ENCODE measurements at regions of chr13 and their contacts with region 1.

Region 1: DNA sequence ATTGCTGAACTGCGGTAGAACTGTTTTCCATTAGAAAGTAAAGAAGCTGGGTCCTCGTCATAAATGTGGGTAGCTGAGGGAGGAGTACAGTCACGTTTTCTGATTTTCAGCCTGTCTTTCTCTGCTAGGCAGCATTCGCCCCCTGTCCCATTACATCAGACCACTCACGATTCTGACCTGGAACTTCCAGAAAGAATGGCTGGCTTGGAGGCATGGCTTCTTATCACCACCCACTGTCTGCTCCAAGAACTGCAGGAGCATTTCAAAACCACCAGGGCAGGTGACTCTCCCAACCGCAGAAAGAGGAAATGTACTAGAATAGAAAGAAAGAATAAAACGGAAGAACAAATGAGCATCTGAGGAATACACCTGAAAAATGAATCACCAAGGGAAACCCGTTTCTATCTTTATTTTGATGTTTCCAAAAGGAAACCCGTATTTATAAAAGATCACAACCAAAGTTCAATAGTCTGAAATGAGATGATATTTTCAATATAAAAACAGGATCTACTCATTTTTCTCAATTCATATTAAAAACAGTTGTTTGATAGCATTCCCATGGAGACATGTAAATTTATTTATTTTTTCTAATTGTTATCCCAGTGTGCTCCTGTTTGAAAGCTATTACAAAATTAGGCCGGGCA is 22.1 kb upstream of the POMP start:
- DNase-seq: peak; percentile 68
- ATAC-seq: peak; percentile 58
- H3K4me3 ChIP-seq: no peak overlapping the region
- H3K27ac ChIP-seq: no peak overlapping the region
- H3K4me1 ChIP-seq: peaks cover 22% of the 10 kb centered on the region
- H3K27me3 ChIP-seq: no peaks in the 10 kb centered on the region
- CTCF ChIP-seq: peak; percentile 78 to 86 (median 86)
- EP300 ChIP-seq: peak in 1 of 2 experiments; percentile 45; a peak in 1 of 4 replicates
- POLR2A ChIP-seq: no peak
- RAD21 ChIP-seq: peak; percentile 93

Region 2: DNA sequence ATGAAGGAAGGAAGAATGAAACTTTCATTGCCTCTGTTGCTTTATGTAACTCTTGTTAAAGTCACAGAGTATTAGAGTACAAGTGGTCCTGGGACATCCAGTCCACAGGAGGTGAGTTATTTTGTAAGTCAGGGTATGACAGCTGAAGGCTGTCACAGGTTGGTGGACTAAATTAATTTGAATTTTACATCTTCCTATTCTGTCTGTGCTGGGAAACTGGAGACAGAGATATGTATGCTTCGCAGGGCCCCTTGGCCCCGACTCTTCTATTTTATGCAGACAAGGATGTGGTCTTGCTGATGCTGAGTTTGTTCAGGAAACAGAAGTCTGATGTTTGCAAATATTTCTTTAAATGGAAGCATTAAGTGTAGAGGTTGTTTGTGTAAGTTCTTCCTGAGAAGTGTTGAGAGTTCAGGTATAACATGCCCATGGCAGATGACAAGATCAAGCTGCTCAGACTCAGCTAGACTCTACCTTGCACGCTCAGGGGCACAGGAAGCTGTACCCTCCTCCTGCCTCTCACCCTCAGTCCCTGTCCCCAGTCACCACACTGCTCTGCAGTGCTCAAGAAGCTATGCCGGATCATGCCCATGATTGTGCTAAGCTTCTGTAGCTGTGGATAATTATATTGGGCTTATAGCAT is 1342.8 kb before region 1 on chr13:
- CTCF ChIA-PET with region 1: no interaction called
- POLR2A ChIA-PET with region 1: no interaction called
- RAD21 ChIA-PET with region 1: no interaction called
- SMC1A ChIA-PET with region 1: no interaction called
- in situ Hi-C with region 1: no loop called
- intact Hi-C with region 1: no loop called
- DNase-seq: no peak
- ATAC-seq: no peak
- H3K4me3 ChIP-seq: no peak overlapping the region
- H3K27ac ChIP-seq: no peak overlapping the region
- H3K4me1 ChIP-seq: no peaks in the 10 kb centered on the region
- H3K27me3 ChIP-seq: peaks cover 1 to 6% of the 10 kb centered on the region in 2 experiments
- CTCF ChIP-seq: no peak
- EP300 ChIP-seq: no peak
- POLR2A ChIP-seq: no peak
- RAD21 ChIP-seq: no peak

Region 3: DNA sequence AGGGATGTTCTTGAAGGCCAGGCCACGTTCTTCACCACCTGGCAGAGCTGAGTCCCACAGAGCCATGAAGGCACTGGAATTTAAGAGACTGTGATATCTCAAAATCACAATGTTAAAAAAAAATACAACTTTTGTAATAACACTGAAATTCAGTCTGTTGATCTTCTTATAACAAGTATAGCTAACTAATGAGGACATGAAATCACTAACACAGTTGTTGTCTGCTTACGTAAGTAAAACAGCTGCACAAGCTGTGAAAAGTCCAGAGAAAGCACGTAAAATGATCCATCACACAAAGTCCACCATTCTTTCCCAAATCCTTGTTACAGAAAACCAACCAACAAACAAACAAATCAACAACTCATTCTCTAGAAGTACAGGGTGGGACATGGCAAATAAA is 569.3 kb before region 1 on chr13:
- CTCF ChIA-PET with region 1: no interaction called
- POLR2A ChIA-PET with region 1: no interaction called
- RAD21 ChIA-PET with region 1: no interaction called
- SMC1A ChIA-PET with region 1: no interaction called
- in situ Hi-C with region 1: no loop called
- intact Hi-C with region 1: loop called (anchors 10 kb)
- DNase-seq: no peak
- ATAC-seq: no peak
- H3K4me3 ChIP-seq: no peak overlapping the region
- H3K27ac ChIP-seq: no peak overlapping the region
- H3K4me1 ChIP-seq: no peaks in the 10 kb centered on the region
- H3K27me3 ChIP-seq: no peaks in the 10 kb centered on the region
- CTCF ChIP-seq: no peak
- EP300 ChIP-seq: no peak
- POLR2A ChIP-seq: no peak
- RAD21 ChIP-seq: no peak

Region 4: GRCh38 chr13:28324181-28324789 is 312.5 kb before region 1 on chr13:
- CTCF ChIA-PET with region 1: interaction called, 63 read pairs
- POLR2A ChIA-PET with region 1: no interaction called
- RAD21 ChIA-PET with region 1: interaction called, 20 read pairs
- SMC1A ChIA-PET with region 1: interaction called, 57 read pairs
- in situ Hi-C with region 1: loop called (anchors 5 kb)
- intact Hi-C with region 1: loop called (anchors 1 kb)
- DNase-seq: peak; percentile 45
- ATAC-seq: peak; percentile 96
- H3K4me3 ChIP-seq: no peak overlapping the region
- H3K27ac ChIP-seq: no peak overlapping the region
- H3K4me1 ChIP-seq: no peaks in the 10 kb centered on the region
- H3K27me3 ChIP-seq: no peaks in the 10 kb centered on the region
- CTCF ChIP-seq: peak; percentile 77 to 91 (median 85)
- EP300 ChIP-seq: no peak
- POLR2A ChIP-seq: no peak
- RAD21 ChIP-seq: peak; percentile 97

Region 5: DNA sequence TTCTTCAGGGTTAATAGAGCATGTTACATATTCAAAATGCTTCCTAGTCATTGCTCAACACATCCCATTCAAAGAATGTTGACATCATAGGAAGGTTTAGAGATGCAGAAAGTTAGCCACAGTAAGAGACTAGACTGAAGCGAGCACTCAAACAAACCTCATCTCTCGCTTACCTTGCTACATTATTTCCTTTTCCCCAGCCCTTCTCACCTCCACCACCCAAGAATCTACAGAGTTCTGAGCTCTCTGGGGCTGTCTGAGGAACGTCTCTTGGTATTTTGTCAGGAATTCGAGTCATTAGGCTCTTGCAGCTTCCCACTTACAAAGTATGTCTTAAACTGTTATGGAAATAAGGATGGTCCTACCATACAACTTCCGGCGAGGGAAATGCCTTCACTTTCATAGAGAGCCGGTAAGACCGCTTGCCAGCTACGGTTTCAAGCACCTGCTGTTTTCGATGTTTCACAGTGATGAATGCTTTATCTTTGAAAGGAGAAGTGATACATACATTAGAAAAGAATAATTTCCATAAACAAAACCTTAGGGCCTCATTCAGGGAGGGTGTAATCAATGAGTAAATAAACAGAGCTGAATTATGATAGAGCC is 207.0 kb before region 1 on chr13:
- CTCF ChIA-PET with region 1: interaction called, 9 read pairs
- POLR2A ChIA-PET with region 1: no interaction called
- RAD21 ChIA-PET with region 1: interaction called, 9 read pairs
- SMC1A ChIA-PET with region 1: interaction called, 9 read pairs
- in situ Hi-C with region 1: no loop called
- intact Hi-C with region 1: loop called (anchors 2 kb)
- DNase-seq: peak; percentile 84
- ATAC-seq: peak; percentile 89
- H3K4me3 ChIP-seq: peak overlapping the region; percentile 58
- H3K27ac ChIP-seq: peak overlapping the region; percentile 96
- H3K4me1 ChIP-seq: peaks cover 18% of the 10 kb centered on the region; the same call in 1 of the 2 replicates
- H3K27me3 ChIP-seq: no peaks in the 10 kb centered on the region
- CTCF ChIP-seq: no peak
- EP300 ChIP-seq: peak; percentile 62 to 87
- POLR2A ChIP-seq: no peak
- RAD21 ChIP-seq: no peak

Region 6: GRCh38 chr13:28607187-28607955 is 29.4 kb before region 1 on chr13:
- CTCF ChIA-PET with region 1: interaction called, 6 read pairs
- POLR2A ChIA-PET with region 1: no interaction called
- RAD21 ChIA-PET with region 1: interaction called, 4 read pairs
- SMC1A ChIA-PET with region 1: interaction called, 11 read pairs
- in situ Hi-C with region 1: no loop called
- intact Hi-C with region 1: no loop called
- DNase-seq: peak; percentile 12
- ATAC-seq: peak; percentile 79
- H3K4me3 ChIP-seq: no peak overlapping the region
- H3K27ac ChIP-seq: no peak overlapping the region
- H3K4me1 ChIP-seq: no peaks in the 10 kb centered on the region
- H3K27me3 ChIP-seq: no peaks in the 10 kb centered on the region
- CTCF ChIP-seq: no peak
- EP300 ChIP-seq: no peak
- POLR2A ChIP-seq: no peak
- RAD21 ChIP-seq: no peak

Region 7: DNA sequence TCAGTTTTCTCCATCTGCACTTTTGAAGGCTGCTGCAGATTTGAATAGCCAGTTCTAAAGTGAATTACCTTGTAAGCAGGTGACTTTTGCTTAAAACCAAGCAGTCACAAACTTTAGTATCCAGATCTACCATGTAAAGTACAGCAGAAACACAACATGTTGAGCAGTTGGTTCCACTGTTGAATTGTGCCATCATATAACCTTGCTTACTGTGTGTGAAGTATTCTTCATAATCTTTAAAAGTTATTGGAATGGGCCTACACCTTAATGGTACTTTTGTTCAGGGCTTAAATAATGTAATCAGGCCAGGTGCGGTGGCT is 160.1 kb after region 1 on chr13:
- CTCF ChIA-PET with region 1: interaction called, 8 read pairs
- POLR2A ChIA-PET with region 1: no interaction called
- RAD21 ChIA-PET with region 1: interaction called, 6 read pairs
- SMC1A ChIA-PET with region 1: interaction called, 7 read pairs
- in situ Hi-C with region 1: no loop called
- intact Hi-C with region 1: loop called (anchors 2 kb)
- DNase-seq: no peak
- ATAC-seq: peak; percentile 34; the same call in 2 of the 3 replicates
- H3K4me3 ChIP-seq: no peak overlapping the region
- H3K27ac ChIP-seq: no peak overlapping the region
- H3K4me1 ChIP-seq: no peaks in the 10 kb centered on the region
- H3K27me3 ChIP-seq: no peaks in the 10 kb centered on the region; a peak in 1 of 4 replicates
- CTCF ChIP-seq: no peak
- EP300 ChIP-seq: no peak
- POLR2A ChIP-seq: no peak
- RAD21 ChIP-seq: no peak